Right ventricle myocardium inferior (tissue), 1 donor: ENCODE measurements at regions of chr12 and their contacts with region 1.

Region 1: GRCh38 chr12:1706633-1706981 is 15.7 kb downstream of the ADIPOR2 start:
- DNase-seq: no peak
- ATAC-seq: no peak

Region 2: DNA sequence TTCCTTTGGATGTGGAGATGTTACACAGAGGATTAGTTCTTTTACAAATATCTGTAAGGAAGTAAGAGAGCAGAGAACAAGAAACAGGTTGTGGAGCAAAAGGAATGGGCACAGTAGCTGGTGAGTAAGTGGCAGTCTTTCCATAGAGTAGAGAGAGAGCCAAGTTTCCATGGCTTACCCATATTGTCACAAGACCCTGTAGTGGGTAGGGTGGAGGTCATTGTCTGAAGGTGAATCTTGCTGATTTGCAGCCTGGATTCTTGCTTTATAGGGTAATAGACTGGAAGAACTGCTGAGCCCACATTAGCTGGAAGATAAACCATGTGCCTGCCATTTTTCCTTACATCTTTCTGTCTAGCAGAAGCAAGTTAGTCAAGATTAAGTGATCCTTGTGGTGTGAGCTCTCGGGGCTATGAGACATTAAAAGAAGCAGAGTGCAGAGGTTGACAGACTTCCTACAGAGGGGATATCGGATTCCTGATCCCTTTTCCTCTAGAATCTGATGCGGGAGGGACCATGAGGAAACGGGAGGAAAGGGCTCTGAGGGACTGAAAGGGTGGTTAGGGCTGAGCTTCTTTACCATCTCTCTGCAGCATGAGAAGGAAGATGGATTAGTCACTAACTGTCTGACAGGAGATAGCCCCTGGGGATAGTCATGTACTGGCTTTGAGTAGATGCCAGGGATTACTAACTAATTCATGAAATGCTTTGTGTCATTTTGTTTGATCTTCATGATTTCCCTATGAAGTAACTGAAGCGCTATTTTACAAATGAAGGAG is 69.8 kb after region 1 on chr12:
- intact Hi-C with region 1: loop called (anchors 5 kb)
- DNase-seq: no peak
- ATAC-seq: no peak

Region 3: GRCh38 chr12:1880153-1880845 is 173.7 kb after region 1 on chr12:
- intact Hi-C with region 1: no loop called
- DNase-seq: no peak
- ATAC-seq: no peak